ENCODE measurements at regions of chr7 and their contacts with region 1.

Region 1: DNA sequence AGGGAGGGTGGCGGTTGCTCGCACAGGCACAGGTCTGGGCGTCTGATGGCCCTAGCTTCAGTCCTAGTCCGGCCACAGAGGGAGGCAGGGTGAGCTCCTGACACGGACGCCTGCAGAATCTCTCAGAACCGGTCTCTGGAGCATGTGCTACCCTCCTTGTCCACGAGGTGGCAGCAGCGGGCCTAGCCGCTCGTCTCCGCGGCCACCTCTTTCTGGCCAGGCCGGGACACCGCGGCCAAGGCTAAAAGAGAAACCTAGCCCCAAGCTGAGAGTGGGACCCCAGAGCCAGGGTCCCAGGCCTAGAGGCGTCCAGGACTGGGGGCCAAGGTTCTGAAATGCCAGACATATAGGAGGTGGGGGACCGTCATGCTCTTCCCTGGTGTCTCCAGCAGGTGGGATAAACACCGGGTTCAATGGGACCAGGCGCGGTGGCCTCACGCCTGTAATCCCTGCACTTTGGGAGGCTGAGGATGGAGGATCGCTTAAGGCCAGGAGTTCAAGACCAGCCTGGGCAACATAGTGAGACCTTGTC is 3.2 kb upstream of the LAT2 start:
- DNase-seq: peak; percentile 95
- ATAC-seq: peak; percentile 91
- H3K4me3 Mint-ChIP-seq: no peak overlapping the region
- H3K27ac Mint-ChIP-seq: no peak overlapping the region
- H3K4me1 Mint-ChIP-seq: no peaks in the 10 kb centered on the region
- H3K27me3 Mint-ChIP-seq: no peaks in the 10 kb centered on the region; the same call in 1 of the 2 replicates
- CTCF ChIP-seq: peak; percentile 98

Region 2: GRCh38 chr7:74043523-74043951 is 163.1 kb before region 1 on chr7:
- CTCF ChIA-PET with region 1: interaction called, 18 read pairs
- POLR2A ChIA-PET with region 1: no interaction called
- DNase-seq: peak; percentile 50
- ATAC-seq: peak; percentile 77
- H3K4me3 Mint-ChIP-seq: peak overlapping the region; percentile 45; the same call in 1 of the 2 replicates
- H3K27ac Mint-ChIP-seq: peak overlapping the region; percentile 84; the same call in 1 of the 2 replicates
- H3K4me1 Mint-ChIP-seq: peaks cover 48% of the 10 kb centered on the region
- H3K27me3 Mint-ChIP-seq: no peaks in the 10 kb centered on the region
- CTCF ChIP-seq: no peak

Region 3: GRCh38 chr7:74139026-74139843 is 67.4 kb before region 1 on chr7:
- CTCF ChIA-PET with region 1: interaction called, 10 read pairs
- POLR2A ChIA-PET with region 1: no interaction called
- DNase-seq: peak; percentile 61
- ATAC-seq: peak; percentile 94
- H3K4me3 Mint-ChIP-seq: peak overlapping the region; percentile 63
- H3K27ac Mint-ChIP-seq: peak overlapping the region; percentile 91
- H3K4me1 Mint-ChIP-seq: peaks cover 31% of the 10 kb centered on the region
- H3K27me3 Mint-ChIP-seq: no peaks in the 10 kb centered on the region
- CTCF ChIP-seq: no peak

Region 4: DNA sequence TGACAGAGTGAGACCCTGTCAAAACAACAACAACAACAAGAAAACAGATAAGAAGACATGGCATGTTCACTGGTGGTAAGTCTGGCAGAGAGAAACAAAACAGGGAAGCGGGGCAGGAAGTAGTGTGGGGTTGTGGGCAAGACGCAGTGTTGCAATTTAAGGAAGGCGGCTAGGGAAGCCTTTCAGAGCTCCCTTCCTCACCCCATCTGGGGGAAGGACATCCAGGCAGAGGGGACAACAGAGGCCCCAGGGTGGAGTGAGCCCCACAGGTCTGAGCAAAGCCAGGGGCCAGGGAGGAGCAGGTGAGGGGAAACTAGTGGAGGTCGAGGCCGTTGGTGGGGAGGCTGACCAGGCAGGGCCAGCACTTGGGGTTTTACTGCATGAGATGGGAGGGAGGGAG is 20.0 kb after region 1 on chr7:
- CTCF ChIA-PET with region 1: interaction called, 18 read pairs
- POLR2A ChIA-PET with region 1: interaction called, 5 read pairs
- DNase-seq: no peak
- ATAC-seq: no peak
- H3K4me3 Mint-ChIP-seq: no peak overlapping the region
- H3K27ac Mint-ChIP-seq: 0 out of 2 replicates have a peak overlapping the region, but pooled peaks have one; percentile 7
- H3K4me1 Mint-ChIP-seq: no peaks in the 10 kb centered on the region
- H3K27me3 Mint-ChIP-seq: no peaks in the 10 kb centered on the region; the same call in 1 of the 2 replicates
- CTCF ChIP-seq: no peak

Region 5: DNA sequence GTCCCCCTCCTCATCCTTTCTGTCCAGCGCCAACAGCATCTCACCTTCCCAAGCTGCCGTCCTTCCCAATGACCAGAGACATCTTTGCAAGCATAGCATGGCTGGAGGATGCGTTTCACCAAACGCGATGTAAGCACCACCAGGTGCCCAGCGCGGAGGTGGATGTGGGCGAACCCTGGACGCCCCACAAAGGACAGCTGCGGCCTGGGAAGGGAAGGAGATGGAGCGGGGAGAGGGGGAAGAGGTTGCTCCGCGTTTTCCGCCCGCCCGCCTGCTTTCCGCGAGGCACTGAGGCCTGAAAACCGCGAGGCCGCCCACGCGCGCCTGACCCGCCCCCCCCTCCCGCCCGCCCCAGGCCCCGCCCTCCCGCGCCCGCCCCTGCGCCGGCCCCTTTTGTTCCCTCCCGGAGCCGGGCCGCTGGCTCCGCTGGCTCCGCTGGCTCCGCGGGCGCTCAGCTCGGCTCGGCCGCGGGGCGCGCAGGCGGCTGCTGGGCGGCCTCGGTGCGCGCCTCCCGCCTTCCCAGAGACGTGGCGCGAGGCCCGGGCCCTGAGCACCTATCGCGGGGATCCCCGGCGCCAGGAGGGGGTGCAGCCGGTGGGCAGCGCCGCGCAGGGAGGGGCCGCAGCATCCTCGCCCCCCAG is 82.5 kb after region 1 on chr7 and contains the start of gene CLIP2:
- CTCF ChIA-PET with region 1: interaction called, 21 read pairs
- POLR2A ChIA-PET with region 1: no interaction called
- DNase-seq: peak; percentile 77
- ATAC-seq: peak; percentile 74
- H3K4me3 Mint-ChIP-seq: peak within 1 kb of the TSS; percentile 85
- H3K27ac Mint-ChIP-seq: peak within 1 kb of the TSS; percentile 84; the same call in 1 of the 2 replicates
- H3K4me1 Mint-ChIP-seq: peaks cover 55% of the 10 kb centered on the region
- H3K27me3 Mint-ChIP-seq: peaks cover 5% of the 10 kb centered on the region
- CTCF ChIP-seq: no peak
- total RNA-seq, gene CLIP2: 48.1 to 49.7 TPM (median 48.4 TPM) in 3 replicates

Region 6: DNA sequence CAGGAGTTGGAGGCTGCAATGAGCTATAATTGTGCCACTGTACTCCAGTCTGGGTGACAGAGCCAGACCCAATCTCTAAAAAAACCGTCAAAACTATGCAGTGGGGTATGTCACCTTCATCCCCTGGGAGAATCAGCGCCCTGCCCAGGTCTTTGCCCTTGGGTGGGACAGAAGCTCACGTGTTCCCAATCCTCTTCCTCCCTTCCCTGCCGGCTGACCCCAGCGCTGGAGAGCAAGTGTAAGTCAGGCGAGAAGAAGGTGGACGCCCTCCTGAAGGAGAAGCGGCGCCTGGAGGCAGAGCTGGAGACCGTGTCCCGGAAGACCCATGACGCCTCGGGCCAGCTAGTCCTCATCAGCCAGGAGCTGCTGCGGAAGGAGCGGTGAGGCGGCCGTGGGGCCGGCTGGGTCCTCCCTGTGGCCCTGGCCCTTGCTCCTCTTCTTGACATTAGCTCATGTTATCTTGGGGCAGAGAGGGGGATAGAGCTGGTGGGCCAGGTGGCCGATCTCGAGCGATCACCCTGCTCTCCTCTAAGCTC is 182.3 kb after region 1 on chr7:
- CTCF ChIA-PET with region 1: interaction called, 31 read pairs
- POLR2A ChIA-PET with region 1: no interaction called
- DNase-seq: no peak
- ATAC-seq: no peak
- H3K4me3 Mint-ChIP-seq: no peak overlapping the region
- H3K27ac Mint-ChIP-seq: no peak overlapping the region
- H3K4me1 Mint-ChIP-seq: peaks cover 3% of the 10 kb centered on the region
- H3K27me3 Mint-ChIP-seq: no peaks in the 10 kb centered on the region
- CTCF ChIP-seq: no peak

Region 7: DNA sequence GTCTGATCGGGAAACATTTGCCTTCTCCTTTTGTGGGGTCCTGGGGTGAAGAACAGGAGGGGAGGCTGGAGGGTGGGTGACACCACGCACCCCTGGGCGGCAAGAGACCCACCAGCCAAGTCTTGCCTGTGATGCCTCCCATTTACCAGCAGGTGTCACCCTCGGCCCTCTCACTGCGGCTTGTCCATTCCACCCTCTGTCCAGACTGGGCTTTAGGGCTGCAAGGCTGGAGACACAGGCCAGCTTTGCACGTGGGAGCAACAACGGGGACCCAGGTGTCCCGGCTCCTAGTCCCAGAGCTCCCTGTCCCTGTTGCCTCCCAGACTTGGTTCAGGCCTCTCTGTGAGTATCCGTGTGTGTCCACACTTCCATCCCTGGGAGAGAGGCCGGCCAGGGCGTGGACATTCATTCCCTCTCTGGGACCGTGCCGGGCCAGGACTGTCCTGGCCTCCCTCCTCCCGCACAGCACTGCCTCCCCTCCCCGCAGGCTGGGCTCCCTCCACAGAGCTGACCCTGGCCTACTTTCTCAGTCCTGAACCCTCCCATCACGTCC is 210.8 kb after region 1 on chr7:
- CTCF ChIA-PET with region 1: interaction called, 11 read pairs
- POLR2A ChIA-PET with region 1: no interaction called
- DNase-seq: peak; percentile 80
- ATAC-seq: peak; percentile 97
- H3K4me3 Mint-ChIP-seq: no peak overlapping the region
- H3K27ac Mint-ChIP-seq: no peak overlapping the region
- H3K4me1 Mint-ChIP-seq: no peaks in the 10 kb centered on the region
- H3K27me3 Mint-ChIP-seq: no peaks in the 10 kb centered on the region; the same call in 1 of the 2 replicates
- CTCF ChIP-seq: peak; percentile 96

Region 8: GRCh38 chr7:74674166-74674565 is 467.5 kb after region 1 on chr7:
- CTCF ChIA-PET with region 1: no interaction called
- POLR2A ChIA-PET with region 1: no interaction called
- DNase-seq: no peak
- ATAC-seq: no peak
- H3K4me3 Mint-ChIP-seq: no peak overlapping the region
- H3K27ac Mint-ChIP-seq: peak overlapping the region; percentile 89; the same call in 1 of the 2 replicates
- H3K4me1 Mint-ChIP-seq: peaks cover 16% of the 10 kb centered on the region
- H3K27me3 Mint-ChIP-seq: no peaks in the 10 kb centered on the region
- CTCF ChIP-seq: no peak